Pancreas (tissue), 10 donors: ENCODE measurements at regions of chr1 and their contacts with region 1.

Region 1: DNA sequence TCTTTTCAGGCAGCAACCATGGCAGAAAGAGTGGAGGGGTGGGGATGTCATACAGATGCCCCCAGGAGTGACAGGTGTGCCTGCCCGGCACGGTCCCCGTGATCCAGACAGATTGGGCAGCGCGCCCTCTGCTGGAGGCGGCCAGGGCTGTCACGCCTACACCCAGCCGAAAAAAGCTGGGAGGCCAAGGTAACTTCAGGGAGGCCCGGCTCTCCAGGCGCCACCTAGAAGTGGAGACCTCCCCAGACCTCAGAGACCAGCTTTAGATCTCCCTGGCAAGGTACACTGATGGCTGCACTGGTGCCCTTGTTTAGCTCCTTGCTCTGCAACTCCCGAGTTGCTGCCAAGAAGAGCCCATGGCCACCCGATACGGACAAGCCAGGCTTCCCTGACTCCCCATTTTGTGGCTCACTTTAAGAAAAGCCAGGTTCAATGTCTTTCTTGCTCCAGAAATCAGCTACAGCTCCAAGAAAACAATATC is 6.6 kb downstream of the GOLT1A start:
- DNase-seq: peak; percentile 54 to 95 (median 76)
- ATAC-seq: peak; percentile 92 to 99 (median 96)
- H3K4me3 ChIP-seq: no peak overlapping the region
- H3K27ac ChIP-seq: no peak overlapping the region
- H3K4me1 ChIP-seq: no peaks in the 10 kb centered on the region
- H3K27me3 ChIP-seq: no peaks in the 10 kb centered on the region
- CTCF ChIP-seq: peak; percentile 73 to 93 (median 88)

Region 2: GRCh38 chr1:204162231-204163074 is 44.7 kb before region 1 on chr1:
- intact Hi-C with region 1: loop called in 1 of 3 experiments (anchors 5 kb)
- DNase-seq: peak; percentile 70 to 94 (median 86)
- ATAC-seq: peak; percentile 93 to 99 (median 98)
- H3K4me3 ChIP-seq: no peak overlapping the region
- H3K27ac ChIP-seq: peak overlapping the region in 1 of 4 donors; percentile 7
- H3K4me1 ChIP-seq: no peaks in the 10 kb centered on the region
- H3K27me3 ChIP-seq: no peaks in the 10 kb centered on the region
- CTCF ChIP-seq: peak; percentile 98 to 100 (median 99)